Dorsolateral prefrontal cortex (tissue), 120 donors: ENCODE measurements at regions of chr1 and their contacts with region 1.

Region 1: DNA sequence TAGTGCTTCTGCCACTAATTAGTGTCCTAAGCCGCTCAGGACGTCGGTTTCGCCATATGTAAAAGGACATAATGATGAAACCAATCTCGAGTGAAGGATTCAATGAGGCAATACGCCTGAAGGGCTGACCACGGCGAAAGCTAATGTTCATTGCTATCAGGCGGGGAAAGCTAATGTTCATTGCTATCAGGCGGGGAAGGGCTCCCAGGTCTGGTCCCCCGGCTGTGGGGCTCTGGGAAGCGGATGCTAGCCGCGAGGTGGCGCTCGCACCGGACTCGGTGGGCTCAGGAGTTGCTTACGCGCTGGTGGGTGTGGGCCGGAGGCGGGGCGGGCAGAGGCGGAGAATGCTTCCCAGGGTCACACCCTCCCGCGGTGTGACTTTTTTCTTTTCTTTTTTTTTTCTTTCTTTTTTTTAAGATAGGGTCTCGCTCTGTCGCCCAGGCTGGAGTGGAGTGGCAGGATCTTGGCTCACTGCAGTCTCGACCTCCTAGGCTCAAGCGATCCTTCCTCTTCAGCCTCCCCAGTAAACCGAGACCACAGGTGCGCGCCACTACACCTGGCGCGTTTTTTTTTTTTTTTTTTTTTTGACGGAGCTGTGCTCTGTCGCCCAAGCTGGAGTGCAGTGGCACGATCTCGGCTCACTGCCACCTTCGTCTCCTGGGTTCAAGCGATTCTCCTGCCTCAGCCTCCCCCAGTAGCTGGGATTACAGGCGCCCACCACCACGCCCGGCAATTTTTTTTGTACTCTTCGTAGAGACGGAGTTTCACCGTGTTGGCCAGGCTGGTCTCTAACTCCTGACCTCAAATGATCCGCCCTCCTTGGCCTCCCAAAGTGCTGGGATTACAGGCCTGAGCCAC is 1.1 kb upstream of the PEAR1 start:
- DNase-seq: peak; percentile 66 to 86 (median 70)
- H3K4me3 ChIP-seq: peak overlapping the region in 57 of 59 donors; percentile 1 to 63 (median 39)
- H3K27ac ChIP-seq: peak overlapping the region in 20 of 59 donors; percentile 38 to 89 (median 81)
- H3K27me3 ChIP-seq: peaks cover 0 to 36% (median 20%) of the 10 kb centered on the region in 45 donors
- CTCF ChIP-seq: peak; percentile 59 to 92 (median 82)

Region 2: DNA sequence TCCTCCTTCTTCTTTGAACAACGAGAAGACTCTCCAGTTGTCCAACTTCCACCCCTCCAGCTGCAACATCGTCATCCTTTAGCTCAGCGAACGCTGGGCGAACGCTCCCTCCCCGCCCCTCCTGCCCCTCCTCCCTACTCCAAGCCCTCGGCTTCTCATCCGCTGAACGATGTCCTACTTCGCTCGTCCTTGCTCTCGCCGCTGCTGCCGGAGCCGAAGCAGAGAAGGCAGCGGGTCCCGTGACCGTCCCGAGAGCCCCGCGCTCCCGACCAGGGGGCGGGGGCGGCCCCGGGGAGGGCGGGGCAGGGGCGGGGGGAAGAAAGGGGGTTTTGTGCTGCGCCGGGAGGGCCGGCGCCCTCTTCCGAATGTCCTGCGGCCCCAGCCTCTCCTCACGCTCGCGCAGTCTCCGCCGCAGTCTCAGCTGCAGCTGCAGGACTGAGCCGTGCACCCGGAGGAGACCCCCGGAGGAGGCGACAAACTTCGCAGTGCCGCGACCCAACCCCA is 250.6 kb before region 1 on chr1 and contains the start of gene BCAN:
- intact Hi-C with region 1: no loop called
- DNase-seq: peak in 9 of 10 donors; percentile 44 to 84 (median 78)
- H3K4me3 ChIP-seq: peak within 1 kb of the TSS; percentile 53 to 84 (median 71)
- H3K27ac ChIP-seq: peak within 1 kb of the TSS; percentile 39 to 96 (median 89)
- H3K27me3 ChIP-seq: peaks cover 0 to 5% (median 0%) of the 10 kb centered on the region in 45 donors
- CTCF ChIP-seq: peak in 17 of 56 donors; percentile 6 to 43 (median 23)
- total RNA-seq, gene BCAN: 56.3 to 240 (median 123) TPM

Region 3: GRCh38 chr1:156689035-156689952 is 203.1 kb before region 1 on chr1:
- intact Hi-C with region 1: loop called in 1 of 2 experiments (anchors 10 kb)
- DNase-seq: peak; percentile 56 to 82 (median 69)
- H3K4me3 ChIP-seq: peak overlapping the region in 44 of 59 donors; percentile 2 to 54 (median 26)
- H3K27ac ChIP-seq: no peak overlapping the region
- H3K27me3 ChIP-seq: peaks cover 0 to 35% (median 4%) of the 10 kb centered on the region in 45 donors
- CTCF ChIP-seq: peak; percentile 63 to 96 (median 92)

Region 4: DNA sequence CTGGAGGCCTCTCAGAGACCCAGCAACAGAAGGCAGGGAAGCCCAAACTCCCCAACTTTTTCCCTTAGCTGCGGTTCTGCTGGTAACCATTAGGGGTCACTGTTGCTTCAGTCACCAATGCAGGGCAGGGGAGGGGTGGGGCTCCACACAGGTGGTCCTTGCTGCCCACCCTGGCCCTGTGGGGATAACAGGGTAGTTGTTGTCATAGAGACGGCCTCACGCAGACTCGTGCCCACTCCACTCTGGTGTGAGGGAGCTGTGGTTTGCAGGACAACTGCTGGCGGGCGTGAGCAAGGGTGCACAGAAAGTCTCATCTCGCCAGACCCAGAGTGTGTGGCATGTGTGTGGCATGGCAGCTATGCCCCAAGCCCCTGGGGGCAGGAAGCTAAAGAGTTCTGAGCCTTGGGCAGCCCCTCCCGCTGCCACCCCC is 53.4 kb before region 1 on chr1:
- intact Hi-C with region 1: loop called in 1 of 2 experiments (anchors 2 kb)
- DNase-seq: no peak
- H3K4me3 ChIP-seq: no peak overlapping the region
- H3K27ac ChIP-seq: no peak overlapping the region
- H3K27me3 ChIP-seq: peaks cover 0 to 67% (median 24%) of the 10 kb centered on the region in 45 donors
- CTCF ChIP-seq: peak; percentile 42 to 90 (median 78)